A549 (cell line): ENCODE measurements at regions of chr2 and their contacts with region 1.

Region 1: DNA sequence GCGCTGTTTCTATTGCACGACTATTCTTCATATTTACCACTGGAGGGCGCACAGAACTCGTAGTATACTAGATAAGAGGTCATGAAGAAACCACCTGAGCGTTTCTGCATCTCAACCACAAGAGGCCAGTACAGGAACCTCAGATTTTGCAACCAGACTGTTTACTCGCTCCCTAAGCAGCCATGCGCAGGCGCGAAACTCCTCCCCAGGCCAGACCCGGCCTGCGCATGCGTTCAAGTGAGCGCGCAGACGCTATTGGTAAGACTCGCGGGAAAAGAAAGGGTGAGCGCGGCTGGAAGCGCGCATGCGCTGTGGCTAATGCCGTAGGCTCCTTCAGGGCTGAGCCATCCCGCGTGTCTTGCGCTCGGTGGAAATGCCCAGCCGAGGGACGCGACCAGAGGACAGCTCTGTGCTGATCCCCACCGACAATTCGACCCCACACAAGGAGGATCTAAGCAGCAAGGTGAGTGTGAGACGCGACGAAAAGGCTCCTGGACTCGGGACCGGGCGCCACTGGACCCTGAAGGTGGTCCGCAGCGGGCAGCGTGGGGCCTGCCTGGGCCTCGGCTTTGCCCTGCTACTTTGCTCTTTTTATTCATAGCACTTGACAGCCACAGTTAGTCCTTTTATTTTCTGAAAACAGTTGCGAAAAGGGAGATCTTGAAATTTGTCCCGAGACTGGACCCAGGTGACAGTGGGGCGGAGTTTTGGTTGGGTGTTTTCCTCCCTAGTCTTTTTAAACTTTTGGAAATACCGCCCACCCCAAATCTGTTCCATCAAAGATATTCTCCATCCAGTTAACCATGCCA is at the start of gene ASNSD1:
- DNase-seq: peak; percentile 95 to 99
- ATAC-seq: peak; percentile 96 to 98
- H3K4me3 ChIP-seq: peak within 1 kb of the TSS; percentile 78
- H3K27ac ChIP-seq: peak within 1 kb of the TSS; percentile 88 to 93
- H3K4me1 ChIP-seq: peaks cover 13% of the 10 kb centered on the region
- CTCF ChIP-seq: peak; percentile 99
- EP300 ChIP-seq: no peak
- POLR2A ChIP-seq: peak; percentile 95
- RAD21 ChIP-seq: peak; percentile 92 to 94
- polyA plus RNA-seq, gene ASNSD1: 47.7 and 69.0 TPM in 2 replicates

Region 2: DNA sequence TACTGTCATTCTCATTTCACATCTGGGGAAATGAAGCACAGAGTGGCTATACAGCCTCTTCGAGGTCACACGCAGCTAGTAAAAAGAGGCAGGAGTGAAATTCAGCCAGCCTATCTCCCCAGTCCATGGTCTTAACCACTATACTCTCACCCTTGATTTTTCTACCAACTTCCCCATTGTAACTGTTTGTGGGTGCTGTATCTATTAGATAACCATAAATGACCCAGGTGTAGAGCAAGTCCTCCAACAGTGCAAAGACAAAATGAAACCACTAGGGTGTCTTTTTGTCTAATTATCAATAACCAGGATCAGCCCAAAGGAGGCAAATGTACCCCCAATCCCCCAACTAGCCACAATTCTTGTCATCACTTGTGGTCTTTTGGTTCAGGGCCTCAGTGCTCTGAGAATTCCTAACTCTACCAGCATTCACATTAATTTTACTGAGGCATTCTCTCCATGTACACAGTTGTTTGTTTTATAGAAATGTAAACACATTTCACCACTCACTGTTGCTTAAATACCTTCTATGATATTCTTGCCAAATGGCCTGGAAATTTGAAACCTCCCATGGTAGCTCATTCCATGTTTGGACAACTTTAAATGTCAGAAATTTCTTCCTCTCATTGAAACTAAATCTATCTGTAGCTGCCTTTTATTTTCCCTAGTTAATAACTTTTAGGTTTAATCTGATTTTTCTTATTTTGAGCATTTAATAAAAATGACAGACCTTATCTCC is 139.5 kb before region 1 on chr2:
- CTCF ChIA-PET with region 1: no interaction called
- POLR2A ChIA-PET with region 1: no interaction called
- DNase-seq: peak in 1 of 2 experiments; percentile 74
- ATAC-seq: peak; percentile 86 to 88
- H3K4me3 ChIP-seq: no peak overlapping the region
- H3K27ac ChIP-seq: peak overlapping the region; percentile 67 to 71
- H3K4me1 ChIP-seq: peaks cover 26% of the 10 kb centered on the region
- CTCF ChIP-seq: no peak
- EP300 ChIP-seq: peak in 1 of 2 experiments; percentile 36; a peak in 1 of 5 replicates
- POLR2A ChIP-seq: no peak
- RAD21 ChIP-seq: peak in 1 of 2 experiments; percentile 11; a peak in 1 of 5 replicates

Region 3: DNA sequence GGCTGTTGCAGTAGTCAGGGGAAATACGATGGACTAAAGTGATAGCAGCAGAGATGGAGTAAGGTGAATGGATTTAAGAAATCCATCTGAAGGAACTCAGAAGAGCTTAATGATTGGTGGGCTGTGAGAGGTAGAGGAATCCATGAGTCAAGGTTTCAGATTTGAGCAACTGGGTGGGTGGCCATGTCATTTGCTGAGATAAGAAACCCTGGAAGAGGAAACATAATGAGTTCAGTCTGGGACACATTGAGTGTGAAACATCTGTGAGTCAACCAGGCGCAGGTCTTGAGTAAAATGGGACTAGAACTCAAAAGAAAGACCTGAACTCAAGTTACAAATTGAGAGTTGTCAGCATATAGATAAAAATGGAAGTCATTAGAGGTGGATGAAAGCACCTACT is 19.8 kb before region 1 on chr2:
- CTCF ChIA-PET with region 1: interaction called, 33 read pairs
- POLR2A ChIA-PET with region 1: no interaction called
- DNase-seq: no peak
- ATAC-seq: no peak
- H3K4me3 ChIP-seq: no peak overlapping the region
- H3K27ac ChIP-seq: no peak overlapping the region
- H3K4me1 ChIP-seq: no peaks in the 10 kb centered on the region
- CTCF ChIP-seq: no peak
- EP300 ChIP-seq: no peak
- POLR2A ChIP-seq: no peak
- RAD21 ChIP-seq: no peak

Region 4: GRCh38 chr2:189674374-189675112 is 13.2 kb after region 1 on chr2 and contains the start of gene ANKAR:
- CTCF ChIA-PET with region 1: interaction called, 72 read pairs
- POLR2A ChIA-PET with region 1: interaction called, 4 read pairs
- DNase-seq: peak; percentile 73 to 92
- ATAC-seq: peak; percentile 99 to 100
- H3K4me3 ChIP-seq: peak within 1 kb of the TSS; percentile 53
- H3K27ac ChIP-seq: peak within 1 kb of the TSS; percentile 82 to 92
- H3K4me1 ChIP-seq: peaks cover 12% of the 10 kb centered on the region
- CTCF ChIP-seq: peak; percentile 95
- EP300 ChIP-seq: no peak
- POLR2A ChIP-seq: peak; percentile 78
- RAD21 ChIP-seq: peak; percentile 9 to 73; a peak in 3 of 5 replicates
- polyA plus RNA-seq, gene ANKAR: 3.1 and 4.8 TPM in 2 replicates

Region 5: GRCh38 chr2:189698020-189698887 is 36.9 kb after region 1 on chr2:
- CTCF ChIA-PET with region 1: interaction called, 19 read pairs
- POLR2A ChIA-PET with region 1: no interaction called
- DNase-seq: peak; percentile 10 to 47
- ATAC-seq: peak; percentile 77 to 80; a peak in 5 of 6 replicates
- H3K4me3 ChIP-seq: no peak overlapping the region
- H3K27ac ChIP-seq: no peak overlapping the region
- H3K4me1 ChIP-seq: no peaks in the 10 kb centered on the region
- CTCF ChIP-seq: peak; percentile 80
- EP300 ChIP-seq: no peak
- POLR2A ChIP-seq: no peak
- RAD21 ChIP-seq: peak; percentile 24 to 35; a peak in 3 of 5 replicates

Region 6: GRCh38 chr2:190069936-190070696 is 408.8 kb after region 1 on chr2:
- CTCF ChIA-PET with region 1: interaction called, 15 read pairs
- POLR2A ChIA-PET with region 1: no interaction called
- DNase-seq: peak; percentile 7 to 74
- ATAC-seq: peak in 1 of 2 experiments; percentile 43; a peak in 2 of 6 replicates
- H3K4me3 ChIP-seq: no peak overlapping the region
- H3K27ac ChIP-seq: no peak overlapping the region
- H3K4me1 ChIP-seq: no peaks in the 10 kb centered on the region
- CTCF ChIP-seq: peak; percentile 82
- EP300 ChIP-seq: no peak
- POLR2A ChIP-seq: no peak
- RAD21 ChIP-seq: peak; percentile 87 to 94